Mammary epithelial cell (primary cell): ENCODE measurements at regions of chr1 and their contacts with region 1.

Region 1: GRCh38 chr1:101238681-101239094 is 1.9 kb downstream of the S1PR1 start:
- DNase-seq: peak; percentile 83
- H3K4me3 ChIP-seq: peak overlapping the region in 2 of 3 experiments; percentile 36 to 87
- H3K27ac ChIP-seq: peak overlapping the region; percentile 34
- H3K4me1 ChIP-seq: peaks cover 12% of the 10 kb centered on the region
- H3K27me3 ChIP-seq: no peaks in the 10 kb centered on the region
- CTCF ChIP-seq: peak; percentile 97 to 98

Region 2: GRCh38 chr1:100921109-100921706 is 317.5 kb before region 1 on chr1:
- CTCF ChIA-PET with region 1: interaction called, 3 read pairs
- dilution Hi-C with region 1: no loop called
- in situ Hi-C with region 1: no loop called
- intact Hi-C with region 1: loop called (anchors 1 kb)
- DNase-seq: peak; percentile 25
- H3K4me3 ChIP-seq: no peak overlapping the region
- H3K27ac ChIP-seq: no peak overlapping the region
- H3K4me1 ChIP-seq: no peaks in the 10 kb centered on the region
- H3K27me3 ChIP-seq: no peaks in the 10 kb centered on the region
- CTCF ChIP-seq: peak; percentile 46 to 51

Region 3: GRCh38 chr1:101043776-101044175 is 194.9 kb before region 1 on chr1:
- CTCF ChIA-PET with region 1: no interaction called
- dilution Hi-C with region 1: no loop called
- in situ Hi-C with region 1: no loop called
- intact Hi-C with region 1: loop called (anchors 5 kb)
- DNase-seq: peak; percentile 25
- H3K4me3 ChIP-seq: no peak overlapping the region
- H3K27ac ChIP-seq: no peak overlapping the region
- H3K4me1 ChIP-seq: no peaks in the 10 kb centered on the region
- H3K27me3 ChIP-seq: no peaks in the 10 kb centered on the region
- CTCF ChIP-seq: peak in 1 of 2 donors; percentile 36

Region 4: GRCh38 chr1:101150670-101151069 is 88.0 kb before region 1 on chr1:
- CTCF ChIA-PET with region 1: no interaction called
- dilution Hi-C with region 1: no loop called
- in situ Hi-C with region 1: no loop called
- intact Hi-C with region 1: loop called (anchors 1 kb)
- DNase-seq: peak; percentile 78
- H3K4me3 ChIP-seq: no peak overlapping the region
- H3K27ac ChIP-seq: peak overlapping the region; percentile 64
- H3K4me1 ChIP-seq: peaks cover 19% of the 10 kb centered on the region
- H3K27me3 ChIP-seq: no peaks in the 10 kb centered on the region
- CTCF ChIP-seq: no peak

Region 5: DNA sequence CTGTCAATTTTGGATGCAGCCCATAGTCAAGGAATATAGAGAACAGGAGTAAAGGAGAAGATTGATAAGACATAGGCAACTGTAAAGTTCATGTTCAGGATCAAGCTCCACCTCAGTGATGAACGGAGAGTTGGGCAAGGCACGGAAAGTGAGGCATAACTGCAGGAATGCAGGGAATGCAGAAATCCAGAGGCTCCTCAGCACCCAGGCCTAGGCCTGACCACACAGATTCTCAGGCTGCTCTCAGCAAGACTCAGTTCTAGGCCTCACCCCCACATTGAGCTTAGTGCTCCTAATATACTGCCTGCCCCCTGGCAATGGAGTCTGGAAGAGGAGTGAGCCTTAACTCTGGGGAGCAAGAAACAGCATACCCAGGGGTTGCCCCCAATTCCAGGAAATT is 38.2 kb before region 1 on chr1:
- CTCF ChIA-PET with region 1: no interaction called
- dilution Hi-C with region 1: no loop called
- in situ Hi-C with region 1: no loop called
- intact Hi-C with region 1: loop called (anchors 1 kb)
- DNase-seq: peak; percentile 75
- H3K4me3 ChIP-seq: no peak overlapping the region
- H3K27ac ChIP-seq: peak overlapping the region; percentile 47
- H3K4me1 ChIP-seq: peaks cover 21% of the 10 kb centered on the region
- H3K27me3 ChIP-seq: no peaks in the 10 kb centered on the region
- CTCF ChIP-seq: no peak

Region 6: GRCh38 chr1:101420406-101420805 is 181.7 kb after region 1 on chr1:
- CTCF ChIA-PET with region 1: no interaction called
- dilution Hi-C with region 1: no loop called
- in situ Hi-C with region 1: no loop called
- intact Hi-C with region 1: no loop called
- DNase-seq: no peak
- H3K4me3 ChIP-seq: no peak overlapping the region
- H3K27ac ChIP-seq: no peak overlapping the region
- H3K4me1 ChIP-seq: no peaks in the 10 kb centered on the region
- H3K27me3 ChIP-seq: no peaks in the 10 kb centered on the region
- CTCF ChIP-seq: no peak